A673 (cell line): ENCODE measurements at regions of chrX and their contacts with region 1.

Region 1: GRCh38 chrX:141814192-141814856 is 23.8 kb upstream of the MAGEC3 start:
- DNase-seq: no peak
- H3K4me3 ChIP-seq: no peak overlapping the region
- H3K27ac ChIP-seq: no peak overlapping the region
- H3K4me1 ChIP-seq: no peaks in the 10 kb centered on the region
- H3K27me3 ChIP-seq: no peaks in the 10 kb centered on the region
- CTCF ChIP-seq: no peak

Region 2: DNA sequence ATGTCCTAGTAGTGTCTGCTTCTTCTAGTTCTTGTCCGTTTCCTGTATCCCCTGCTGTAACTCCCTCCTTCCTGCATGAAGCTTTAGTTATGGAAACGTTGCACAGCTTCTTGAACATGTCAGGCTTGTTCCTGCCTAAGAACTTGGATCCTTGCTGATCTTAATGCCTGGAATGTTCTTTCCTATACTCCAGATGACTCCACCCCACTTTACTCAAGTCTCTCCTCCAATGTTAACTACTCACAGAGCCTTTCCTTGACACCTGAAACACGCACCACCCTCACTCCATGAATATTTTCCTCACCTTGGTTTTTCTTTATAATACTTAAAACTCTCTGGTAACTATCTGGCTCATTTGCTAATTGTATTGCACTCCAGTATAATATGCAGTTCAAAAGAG is 43.2 kb after region 1 on chrX:
- CTCF ChIA-PET with region 1: no interaction called
- POLR2A ChIA-PET with region 1: no interaction called
- intact Hi-C with region 1: loop called (anchors 5 kb)
- DNase-seq: no peak
- H3K4me3 ChIP-seq: no peak overlapping the region
- H3K27ac ChIP-seq: no peak overlapping the region
- H3K4me1 ChIP-seq: no peaks in the 10 kb centered on the region
- H3K27me3 ChIP-seq: no peaks in the 10 kb centered on the region
- CTCF ChIP-seq: no peak